ENCODE measurements at regions of chr2 and their contacts with region 1.

Region 1: GRCh38 chr2:207473049-207473930 is 56.5 kb upstream of the CREB1 start:
- DNase-seq: peak in 8 of 10 donors; percentile 53 to 93 (median 68)

Region 2: GRCh38 chr2:206693399-206694137 is 779.7 kb before region 1 on chr2:
- intact Hi-C with region 1: loop called (anchors 5 kb)
- DNase-seq: peak in 1 of 10 donors; percentile 12

Region 3: GRCh38 chr2:206800506-206801417 is 672.5 kb before region 1 on chr2:
- intact Hi-C with region 1: loop called (anchors 1 kb)
- DNase-seq: peak; percentile 59 to 95 (median 71)

Region 4: DNA sequence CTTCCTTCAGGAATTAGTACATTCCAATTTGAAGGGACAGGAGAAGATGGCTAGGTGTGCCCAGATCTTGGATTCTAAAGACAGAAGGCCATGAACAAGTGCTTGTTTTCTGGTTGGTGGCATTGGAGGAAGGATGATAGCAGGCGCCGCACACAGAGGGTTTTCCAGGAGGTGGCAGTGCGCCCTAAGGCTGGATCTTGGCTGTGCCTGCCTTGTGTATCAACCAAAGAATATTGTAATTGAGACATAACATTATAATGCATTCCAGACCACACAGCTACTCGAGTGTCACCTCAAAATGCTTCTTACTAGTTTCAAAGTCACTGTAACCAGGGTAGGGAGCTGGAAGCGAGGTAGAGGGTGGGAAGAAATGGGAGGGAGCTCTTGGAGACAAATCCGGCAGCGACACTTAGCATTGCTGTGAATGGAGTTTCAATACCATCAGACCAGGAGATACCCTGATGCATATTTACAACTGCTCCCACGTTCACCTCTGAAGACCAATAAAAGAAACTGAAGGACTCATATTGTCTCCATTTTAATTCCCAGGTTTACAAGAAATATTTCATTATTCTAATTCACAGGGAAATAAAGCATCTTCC is 491.4 kb before region 1 on chr2:
- intact Hi-C with region 1: loop called (anchors 1 kb)
- DNase-seq: peak; percentile 78 to 98 (median 88)

Region 5: DNA sequence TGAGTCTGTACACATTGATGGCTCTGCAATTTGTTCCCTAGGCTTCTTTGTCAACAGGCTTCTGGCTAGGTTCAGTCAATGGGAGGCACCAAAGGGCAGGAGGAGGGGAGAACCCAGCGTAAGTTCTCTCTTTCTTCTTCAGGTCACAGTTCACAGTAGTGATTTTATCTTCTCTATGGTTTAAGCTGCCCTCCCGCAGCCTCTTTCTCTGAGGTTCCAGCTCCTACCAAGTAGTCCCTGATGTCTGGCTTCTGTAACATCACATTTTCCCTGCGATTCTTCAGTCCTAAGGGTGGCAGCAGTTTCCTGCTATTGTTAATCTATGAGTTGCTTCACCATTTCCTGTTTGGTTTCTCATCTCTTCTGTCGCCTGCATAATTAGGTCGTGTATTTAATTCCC is 426.6 kb before region 1 on chr2:
- intact Hi-C with region 1: loop called (anchors 10 kb)
- DNase-seq: peak in 2 of 10 donors; percentile 32 to 66

Region 6: DNA sequence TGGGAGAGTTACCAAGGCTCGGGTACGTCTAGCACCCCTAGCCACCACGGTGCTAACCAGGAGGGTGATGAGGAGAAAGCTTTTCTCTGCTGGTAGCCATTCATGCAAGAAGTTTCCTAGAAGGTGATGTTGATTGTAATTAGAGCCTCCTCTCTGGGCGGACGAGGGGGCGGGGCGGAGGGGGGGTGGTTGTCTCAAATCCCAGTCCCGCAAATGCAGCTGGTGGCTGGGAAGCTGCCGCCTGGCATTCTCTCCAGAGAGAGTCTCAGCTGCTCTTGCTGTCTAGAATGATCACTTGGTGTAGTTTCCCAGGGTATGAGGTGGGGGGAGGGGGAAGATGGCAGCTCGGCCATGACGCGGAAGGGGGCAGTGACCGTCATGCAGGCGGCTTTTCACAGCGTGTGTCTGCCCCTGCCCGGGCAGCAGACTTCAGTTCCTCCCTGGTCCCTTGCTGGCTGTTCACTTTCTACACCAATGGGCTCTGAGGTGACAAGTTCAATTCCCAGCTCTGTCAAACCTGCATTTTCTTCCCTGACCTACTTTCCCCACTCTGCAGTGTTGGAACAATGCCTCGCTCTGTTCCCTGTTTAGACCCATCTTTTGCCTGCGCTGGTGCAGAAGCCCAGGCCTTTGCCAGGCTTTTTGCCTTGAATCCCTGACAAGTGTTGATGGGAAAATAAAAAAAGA is 246.1 kb before region 1 on chr2:
- intact Hi-C with region 1: loop called (anchors 5 kb)
- DNase-seq: peak; percentile 55 to 95 (median 70)

Region 7: GRCh38 chr2:207385903-207386302 is 87.4 kb before region 1 on chr2:
- intact Hi-C with region 1: no loop called
- DNase-seq: no peak

Region 8: GRCh38 chr2:207854484-207855440 is 381.5 kb after region 1 on chr2:
- intact Hi-C with region 1: no loop called
- DNase-seq: no peak